GM12878 (cell line): ENCODE measurements at regions of chr15 and their contacts with region 1.

Region 1: DNA sequence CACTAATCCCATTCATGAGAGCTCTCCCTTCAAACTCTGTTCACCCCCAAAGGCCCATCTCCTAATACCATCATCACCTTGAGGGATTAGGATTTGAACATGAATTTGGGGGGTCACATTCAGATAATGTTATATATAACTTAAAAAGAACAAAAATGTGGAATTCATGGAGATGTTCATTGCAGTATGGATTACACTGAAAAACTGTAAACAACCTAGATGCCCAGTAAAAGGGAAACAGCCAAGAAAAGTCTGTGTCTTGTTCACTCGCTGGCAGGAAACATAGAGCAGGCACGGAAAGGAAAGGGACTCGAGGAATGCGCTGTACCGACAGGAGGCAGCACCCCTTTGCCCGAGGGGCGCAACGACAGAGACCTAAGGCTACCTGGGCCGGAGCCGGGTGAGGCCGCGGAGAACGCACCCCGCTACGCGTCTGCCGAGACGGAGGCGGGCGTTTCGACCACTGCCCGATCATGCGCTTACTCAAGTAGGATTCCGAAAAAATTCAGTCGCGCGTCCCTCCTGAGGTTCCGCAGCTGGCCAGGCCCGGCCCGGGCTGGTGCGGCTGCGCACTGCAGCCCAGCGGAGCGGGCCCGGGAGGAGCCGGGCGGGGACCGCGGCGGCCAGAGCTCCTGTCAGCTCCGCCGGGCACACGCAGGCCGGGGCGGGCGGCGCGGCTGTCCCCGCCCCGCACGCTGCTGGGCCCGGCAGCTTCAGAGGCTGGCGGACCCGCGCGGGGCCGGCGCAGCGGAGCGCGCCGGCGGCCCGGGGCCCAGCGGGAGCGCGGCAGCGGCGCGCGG is 862 bp upstream of the MAN2A2 start:
- DNase-seq: peak; percentile 59
- ATAC-seq: peak; percentile 87
- H3K4me3 ChIP-seq: peak overlapping the region; percentile 67
- H3K27ac ChIP-seq: peak overlapping the region; percentile 62
- H3K4me1 ChIP-seq: peaks cover 20% of the 10 kb centered on the region
- H3K27me3 ChIP-seq: no peaks in the 10 kb centered on the region
- CTCF ChIP-seq: peak; percentile 85 to 89 (median 85)
- EP300 ChIP-seq: no peak
- POLR2A ChIP-seq: peak; percentile 75
- RAD21 ChIP-seq: peak; percentile 45; the same call in 1 of the 2 replicates

Region 2: DNA sequence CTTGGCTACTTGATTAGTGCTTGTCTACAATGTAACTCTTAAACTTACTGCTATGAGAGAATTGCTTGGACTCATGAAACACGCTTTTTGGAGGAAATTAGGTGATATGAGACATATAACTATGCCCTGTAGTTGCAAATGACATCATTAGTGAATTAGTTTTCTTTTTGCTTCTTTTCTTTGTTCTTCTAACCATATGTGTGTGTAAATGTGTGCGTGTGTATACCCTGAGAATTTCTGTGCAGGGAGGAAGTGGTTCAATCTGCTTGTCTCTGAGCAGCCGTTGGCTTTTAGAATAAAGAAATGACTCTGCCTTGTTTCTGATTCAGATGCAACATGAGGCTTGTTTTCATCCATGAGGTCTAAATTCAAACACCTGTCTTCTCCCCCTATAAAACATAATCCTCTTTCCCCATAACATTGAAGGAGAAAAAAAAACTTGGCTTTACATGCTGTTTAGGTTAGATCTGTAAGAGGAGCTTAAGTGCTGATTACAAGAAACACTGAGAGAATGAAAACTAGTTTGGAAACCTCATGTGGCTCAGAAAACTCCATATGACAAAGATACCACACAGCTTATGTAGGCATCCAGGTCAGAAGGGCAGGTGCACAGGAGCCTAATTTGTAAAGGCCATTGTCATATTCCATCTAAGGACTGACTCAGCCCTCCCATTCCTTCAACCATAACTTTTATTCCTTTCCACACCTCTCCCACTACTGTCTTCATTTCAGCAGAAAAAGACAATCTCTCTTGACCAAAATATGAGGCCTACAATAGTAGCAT is 215.6 kb before region 1 on chr15:
- CTCF ChIA-PET with region 1: no interaction called
- POLR2A ChIA-PET with region 1: no interaction called
- RAD21 ChIA-PET with region 1: no interaction called
- SMC1A ChIA-PET with region 1: no interaction called
- in situ Hi-C with region 1: no loop called
- intact Hi-C with region 1: no loop called
- DNase-seq: peak; percentile 92
- ATAC-seq: peak; percentile 85
- H3K4me3 ChIP-seq: no peak overlapping the region
- H3K27ac ChIP-seq: peak overlapping the region; percentile 99
- H3K4me1 ChIP-seq: peaks cover 53% of the 10 kb centered on the region
- H3K27me3 ChIP-seq: no peaks in the 10 kb centered on the region
- CTCF ChIP-seq: no peak
- EP300 ChIP-seq: peak; percentile 91 to 93
- POLR2A ChIP-seq: no peak
- RAD21 ChIP-seq: no peak; the same call in 1 of the 2 replicates

Region 3: DNA sequence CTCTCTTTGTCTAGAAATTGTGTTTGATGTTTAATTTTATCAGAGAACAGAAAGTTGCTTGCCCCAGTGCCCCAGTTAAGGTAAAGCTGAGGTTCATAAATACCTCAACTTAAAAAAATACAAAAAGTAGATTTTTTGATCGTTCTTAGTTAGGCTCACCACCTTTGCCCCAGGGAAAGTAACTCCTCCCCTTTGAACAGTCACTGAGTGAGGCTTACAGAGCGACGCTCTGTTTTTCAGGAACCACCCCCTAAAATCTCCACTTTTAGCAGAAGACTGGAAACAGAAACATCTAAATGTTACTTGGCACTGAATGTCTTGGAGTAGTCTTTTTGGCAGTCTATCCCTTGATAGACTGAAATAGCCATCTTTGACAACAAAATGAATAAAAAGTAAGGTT is 160.2 kb before region 1 on chr15:
- CTCF ChIA-PET with region 1: no interaction called
- POLR2A ChIA-PET with region 1: no interaction called
- RAD21 ChIA-PET with region 1: no interaction called
- SMC1A ChIA-PET with region 1: no interaction called
- in situ Hi-C with region 1: no loop called
- intact Hi-C with region 1: no loop called
- DNase-seq: no peak
- ATAC-seq: no peak
- H3K4me3 ChIP-seq: no peak overlapping the region
- H3K27ac ChIP-seq: no peak overlapping the region
- H3K4me1 ChIP-seq: no peaks in the 10 kb centered on the region; the same call in 1 of the 2 replicates
- H3K27me3 ChIP-seq: no peaks in the 10 kb centered on the region
- CTCF ChIP-seq: no peak
- EP300 ChIP-seq: no peak
- POLR2A ChIP-seq: no peak
- RAD21 ChIP-seq: no peak

Region 4: DNA sequence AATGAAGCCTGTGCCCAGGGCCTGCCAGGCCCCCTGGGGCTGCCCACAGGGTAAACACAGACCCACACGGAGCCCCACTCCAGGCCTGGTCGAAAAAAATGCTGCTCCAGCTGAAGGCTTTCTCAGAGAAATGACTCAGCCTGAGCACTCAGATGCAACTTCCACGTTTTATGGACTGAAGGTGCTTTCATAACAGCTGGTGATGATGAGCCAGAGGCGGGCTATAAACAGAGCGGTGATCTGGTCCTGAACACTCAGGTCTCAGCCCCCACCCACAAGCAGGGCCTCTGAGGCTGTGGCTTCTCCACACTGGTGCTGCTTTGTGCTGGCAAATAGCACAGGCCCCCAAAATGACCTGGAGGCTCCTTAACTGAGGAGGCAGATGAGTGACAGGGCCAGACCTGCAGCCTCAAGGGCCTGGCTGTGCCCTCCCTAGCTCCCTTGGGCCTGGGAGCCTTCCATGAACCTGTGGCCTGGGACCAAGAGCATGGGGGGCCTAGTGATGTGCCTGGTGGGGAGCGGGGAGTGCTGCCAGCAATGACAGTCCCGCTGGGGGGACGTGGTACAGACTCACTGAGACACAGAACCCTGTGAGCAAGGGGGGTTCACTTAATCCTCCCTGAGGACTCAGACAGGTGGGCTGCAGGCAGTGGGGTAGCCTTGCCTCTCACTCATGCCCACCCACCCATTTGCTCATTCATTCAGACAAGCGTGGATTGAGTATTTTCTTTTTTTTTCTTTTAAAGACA is 56.9 kb before region 1 on chr15:
- CTCF ChIA-PET with region 1: no interaction called
- POLR2A ChIA-PET with region 1: no interaction called
- RAD21 ChIA-PET with region 1: no interaction called
- SMC1A ChIA-PET with region 1: no interaction called
- in situ Hi-C with region 1: no loop called
- intact Hi-C with region 1: no loop called
- DNase-seq: peak; percentile 50
- ATAC-seq: peak; percentile 96
- H3K4me3 ChIP-seq: no peak overlapping the region
- H3K27ac ChIP-seq: peak overlapping the region; percentile 40
- H3K4me1 ChIP-seq: peaks cover 9% of the 10 kb centered on the region
- H3K27me3 ChIP-seq: no peaks in the 10 kb centered on the region
- CTCF ChIP-seq: no peak
- EP300 ChIP-seq: peak in 1 of 2 experiments; percentile 33; a peak in 1 of 4 replicates
- POLR2A ChIP-seq: no peak
- RAD21 ChIP-seq: no peak

Region 5: GRCh38 chr15:90860942-90861675 is 41.1 kb before region 1 on chr15:
- CTCF ChIA-PET with region 1: no interaction called
- POLR2A ChIA-PET with region 1: no interaction called
- RAD21 ChIA-PET with region 1: no interaction called
- SMC1A ChIA-PET with region 1: no interaction called
- in situ Hi-C with region 1: no loop called
- intact Hi-C with region 1: no loop called
- DNase-seq: no peak
- ATAC-seq: no peak
- H3K4me3 ChIP-seq: no peak overlapping the region
- H3K27ac ChIP-seq: no peak overlapping the region
- H3K4me1 ChIP-seq: peaks cover 12% of the 10 kb centered on the region
- H3K27me3 ChIP-seq: no peaks in the 10 kb centered on the region
- CTCF ChIP-seq: no peak
- EP300 ChIP-seq: no peak
- POLR2A ChIP-seq: no peak
- RAD21 ChIP-seq: no peak

Region 6: DNA sequence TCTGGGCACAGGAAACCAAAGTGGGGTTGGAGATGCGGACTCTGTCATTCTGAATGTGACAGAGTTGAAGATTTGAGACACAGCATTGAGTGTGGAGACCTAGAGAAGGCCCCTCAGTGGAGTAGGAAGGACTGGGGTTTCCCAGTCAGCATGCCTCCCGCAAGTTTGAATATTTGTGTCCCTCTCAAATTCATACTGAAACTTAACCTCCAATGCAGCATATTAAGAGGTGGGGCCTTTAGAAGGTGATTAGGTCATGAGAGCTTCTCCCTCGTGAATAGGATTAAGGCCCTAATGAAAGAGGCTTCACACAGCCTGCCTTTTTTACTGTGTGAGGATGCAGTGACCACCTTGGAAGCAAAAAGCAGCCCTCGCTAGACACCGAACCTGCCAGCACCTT is 22.1 kb after region 1 on chr15:
- CTCF ChIA-PET with region 1: interaction called, 480 read pairs
- POLR2A ChIA-PET with region 1: interaction called, 113 read pairs
- RAD21 ChIA-PET with region 1: interaction called, 193 read pairs
- SMC1A ChIA-PET with region 1: interaction called, 225 read pairs
- in situ Hi-C with region 1: no loop called
- intact Hi-C with region 1: loop called (anchors 2 kb)
- DNase-seq: no peak
- ATAC-seq: peak; percentile 87
- H3K4me3 ChIP-seq: peak overlapping the region; percentile 25; the same call in 1 of the 2 replicates
- H3K27ac ChIP-seq: peak overlapping the region; percentile 89
- H3K4me1 ChIP-seq: peaks cover 32% of the 10 kb centered on the region
- H3K27me3 ChIP-seq: no peaks in the 10 kb centered on the region
- CTCF ChIP-seq: no peak
- EP300 ChIP-seq: 0 out of 4 replicates have a peak, but pooled peaks of 1 of the 2 experiments have one; percentile 12
- POLR2A ChIP-seq: peak; percentile 30; the same call in 1 of the 2 replicates
- RAD21 ChIP-seq: no peak